AG04449 (cell line): ENCODE measurements at regions of chr3 and their contacts with region 1.

Region 1: GRCh38 chr3:123652346-123652984 is 67.6 kb upstream of the HACD2 start:
- DNase-seq: no peak
- H3K4me3 ChIP-seq: no peak overlapping the region
- CTCF ChIP-seq: peak; percentile 97

Region 2: DNA sequence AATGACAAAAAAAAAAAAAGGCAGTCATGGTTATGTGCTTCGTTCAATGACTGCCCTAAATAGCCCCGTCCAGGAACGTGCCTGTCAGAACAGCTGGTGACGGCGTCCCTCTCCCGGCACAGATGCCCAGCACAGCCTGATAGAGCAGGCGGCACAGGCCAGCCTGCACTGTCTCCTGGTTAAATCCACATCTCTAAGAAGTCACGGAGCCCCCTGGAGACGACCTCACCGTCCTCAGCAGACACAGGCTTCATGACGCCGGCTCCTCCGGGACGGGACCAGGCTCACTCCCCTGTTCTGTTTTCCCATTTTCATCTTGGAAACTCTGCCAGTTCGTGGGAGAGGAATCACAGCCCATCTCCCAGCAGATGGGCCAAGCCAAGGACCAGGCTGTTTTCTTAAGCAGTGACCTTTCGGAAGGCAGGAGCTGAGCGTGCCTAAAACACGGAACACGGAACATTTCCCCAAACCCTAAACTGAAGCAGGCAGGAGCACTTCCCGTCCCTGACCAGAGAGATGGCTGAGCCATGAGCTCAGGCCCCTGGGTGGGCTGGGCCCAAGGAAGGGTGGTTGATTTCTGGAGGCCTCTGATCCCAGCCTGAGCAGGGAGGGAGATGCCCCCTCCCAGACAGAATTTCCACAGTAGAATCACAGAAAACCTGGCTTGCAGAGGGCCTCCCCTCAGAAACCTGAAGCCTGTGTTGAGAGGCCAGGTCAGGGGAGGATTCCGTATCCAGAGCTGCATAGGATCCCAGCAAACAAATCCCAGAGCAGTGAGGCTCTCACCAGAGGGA is 239.5 kb before region 1 on chr3:
- CTCF ChIA-PET with region 1: no interaction called
- POLR2A ChIA-PET with region 1: no interaction called
- DNase-seq: no peak
- H3K4me3 ChIP-seq: no peak overlapping the region
- CTCF ChIP-seq: no peak

Region 3: GRCh38 chr3:123642182-123642956 is 10.1 kb before region 1 on chr3:
- CTCF ChIA-PET with region 1: interaction called, 201 read pairs
- POLR2A ChIA-PET with region 1: no interaction called
- DNase-seq: peak; percentile 56
- H3K4me3 ChIP-seq: no peak overlapping the region
- CTCF ChIP-seq: peak; percentile 67

Region 4: GRCh38 chr3:123688241-123688747 is 35.8 kb after region 1 on chr3:
- CTCF ChIA-PET with region 1: interaction called, 81 read pairs
- POLR2A ChIA-PET with region 1: interaction called, 4 read pairs
- DNase-seq: peak; percentile 86
- H3K4me3 ChIP-seq: no peak overlapping the region
- CTCF ChIP-seq: no peak

Region 5: DNA sequence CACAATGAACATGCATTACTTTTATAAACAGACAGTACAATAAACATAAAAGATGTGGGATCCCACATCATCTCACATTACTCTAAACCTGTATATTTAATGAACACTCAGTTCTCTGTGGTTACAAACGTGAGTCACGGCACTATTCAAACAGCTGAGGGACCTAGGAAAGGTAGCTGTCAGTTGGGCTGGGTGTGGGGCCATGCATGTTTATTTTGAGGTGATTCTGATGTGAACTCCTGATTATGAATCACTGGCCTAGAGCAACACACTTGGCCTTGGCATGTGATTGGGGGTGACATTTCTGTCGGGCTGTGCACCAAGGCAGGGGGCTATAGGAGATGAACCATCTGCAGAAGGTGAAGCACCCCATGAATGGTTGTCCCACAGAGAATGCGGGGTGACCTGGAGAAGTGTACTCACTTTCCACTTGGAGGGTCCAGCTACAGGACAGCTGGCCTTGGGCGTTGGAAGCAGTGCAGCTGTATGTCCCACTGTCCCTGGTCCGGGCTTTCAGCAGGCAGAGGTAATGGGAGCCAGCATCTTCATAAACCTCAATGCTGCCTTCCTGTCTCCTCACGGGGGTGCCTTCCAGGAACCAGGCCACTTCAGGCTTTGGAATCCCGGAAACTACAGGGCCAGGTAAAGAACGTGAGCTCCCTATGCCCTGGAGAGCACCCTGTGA is 80.2 kb after region 1 on chr3:
- CTCF ChIA-PET with region 1: interaction called, 512 read pairs
- POLR2A ChIA-PET with region 1: no interaction called
- DNase-seq: no peak
- H3K4me3 ChIP-seq: no peak overlapping the region
- CTCF ChIP-seq: no peak

Region 6: GRCh38 chr3:123745184-123745855 is 92.9 kb after region 1 on chr3:
- CTCF ChIA-PET with region 1: interaction called, 21 read pairs
- POLR2A ChIA-PET with region 1: interaction called, 3 read pairs
- DNase-seq: no peak
- H3K4me3 ChIP-seq: no peak overlapping the region
- CTCF ChIP-seq: no peak

Region 7: GRCh38 chr3:123773681-123774431 is 121.4 kb after region 1 on chr3:
- CTCF ChIA-PET with region 1: interaction called, 10 read pairs
- POLR2A ChIA-PET with region 1: no interaction called
- DNase-seq: no peak
- H3K4me3 ChIP-seq: no peak overlapping the region
- CTCF ChIP-seq: no peak